GM23248 (cell line): ENCODE measurements at regions of chr4 and their contacts with region 1.

Region 1: GRCh38 chr4:144174401-144175067 is 34.0 kb upstream of the GYPA start:
- DNase-seq: peak; percentile 77
- H3K4me3 ChIP-seq: no peak overlapping the region
- H3K27ac ChIP-seq: no peak overlapping the region
- H3K4me1 ChIP-seq: no peaks in the 10 kb centered on the region
- H3K27me3 ChIP-seq: no peaks in the 10 kb centered on the region; the same call in 1 of the 2 replicates

Region 2: GRCh38 chr4:143939528-143939927 is 235.0 kb before region 1 on chr4:
- in situ Hi-C with region 1: no loop called
- DNase-seq: no peak
- H3K4me3 ChIP-seq: no peak overlapping the region
- H3K27ac ChIP-seq: no peak overlapping the region
- H3K4me1 ChIP-seq: no peaks in the 10 kb centered on the region
- H3K27me3 ChIP-seq: no peaks in the 10 kb centered on the region

Region 3: DNA sequence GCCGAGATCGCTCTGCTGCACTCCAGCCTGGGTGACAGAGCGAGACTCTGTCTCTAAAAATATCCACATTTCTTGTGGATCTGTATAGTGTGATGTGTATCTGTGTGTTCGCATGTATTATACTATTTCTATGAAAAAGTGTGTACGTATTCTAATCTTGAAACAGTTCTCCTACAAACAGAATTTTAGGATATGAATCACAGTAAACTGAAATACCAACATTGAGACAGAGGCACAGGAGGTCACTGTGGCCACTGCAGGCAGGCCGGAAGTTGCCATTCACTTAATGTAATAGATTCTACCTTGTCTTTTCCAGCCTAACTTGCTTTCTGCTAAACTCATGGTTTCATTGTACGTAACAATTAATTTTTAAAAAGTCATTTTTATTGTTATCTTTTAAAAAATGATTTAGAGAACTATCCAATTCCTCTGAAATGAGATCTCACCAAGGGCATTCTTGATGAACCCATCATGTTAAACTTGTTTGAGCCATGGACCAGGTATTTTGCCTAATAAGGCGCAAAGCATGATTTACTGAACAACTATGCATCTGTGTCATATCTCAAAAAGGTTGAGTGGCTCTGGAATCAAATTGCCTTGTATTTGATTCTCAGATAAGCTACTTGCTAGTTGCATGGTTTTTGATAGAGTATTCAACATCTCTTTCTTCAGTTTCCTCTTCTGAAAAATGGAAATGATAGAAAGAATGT is 120.9 kb after region 1 on chr4:
- in situ Hi-C with region 1: no loop called
- DNase-seq: no peak
- H3K4me3 ChIP-seq: no peak overlapping the region
- H3K27ac ChIP-seq: no peak overlapping the region
- H3K4me1 ChIP-seq: no peaks in the 10 kb centered on the region
- H3K27me3 ChIP-seq: no peaks in the 10 kb centered on the region

Region 4: GRCh38 chr4:144787365-144788258 is 613.1 kb after region 1 on chr4:
- in situ Hi-C with region 1: loop called (anchors 25 kb)
- DNase-seq: peak; percentile 51
- H3K4me3 ChIP-seq: no peak overlapping the region
- H3K27ac ChIP-seq: no peak overlapping the region
- H3K4me1 ChIP-seq: peaks cover 7% of the 10 kb centered on the region; the same call in 1 of the 2 replicates
- H3K27me3 ChIP-seq: peaks cover 33% of the 10 kb centered on the region

Region 5: GRCh38 chr4:145061318-145061920 is 886.9 kb after region 1 on chr4:
- in situ Hi-C with region 1: loop called (anchors 25 kb)
- DNase-seq: peak; percentile 60
- H3K4me3 ChIP-seq: no peak overlapping the region
- H3K27ac ChIP-seq: no peak overlapping the region
- H3K4me1 ChIP-seq: no peaks in the 10 kb centered on the region
- H3K27me3 ChIP-seq: no peaks in the 10 kb centered on the region

Region 6: GRCh38 chr4:145580906-145581305 is 1406.4 kb after region 1 on chr4:
- in situ Hi-C with region 1: loop called (anchors 25 kb)
- DNase-seq: peak; percentile 20
- H3K4me3 ChIP-seq: no peak overlapping the region
- H3K27ac ChIP-seq: no peak overlapping the region
- H3K4me1 ChIP-seq: no peaks in the 10 kb centered on the region
- H3K27me3 ChIP-seq: 0 out of 2 replicates have a peak, but pooled peaks cover 5% of the 10 kb centered on the region